ENCODE measurements at regions of chr3 and their contacts with region 1.

Region 1: DNA sequence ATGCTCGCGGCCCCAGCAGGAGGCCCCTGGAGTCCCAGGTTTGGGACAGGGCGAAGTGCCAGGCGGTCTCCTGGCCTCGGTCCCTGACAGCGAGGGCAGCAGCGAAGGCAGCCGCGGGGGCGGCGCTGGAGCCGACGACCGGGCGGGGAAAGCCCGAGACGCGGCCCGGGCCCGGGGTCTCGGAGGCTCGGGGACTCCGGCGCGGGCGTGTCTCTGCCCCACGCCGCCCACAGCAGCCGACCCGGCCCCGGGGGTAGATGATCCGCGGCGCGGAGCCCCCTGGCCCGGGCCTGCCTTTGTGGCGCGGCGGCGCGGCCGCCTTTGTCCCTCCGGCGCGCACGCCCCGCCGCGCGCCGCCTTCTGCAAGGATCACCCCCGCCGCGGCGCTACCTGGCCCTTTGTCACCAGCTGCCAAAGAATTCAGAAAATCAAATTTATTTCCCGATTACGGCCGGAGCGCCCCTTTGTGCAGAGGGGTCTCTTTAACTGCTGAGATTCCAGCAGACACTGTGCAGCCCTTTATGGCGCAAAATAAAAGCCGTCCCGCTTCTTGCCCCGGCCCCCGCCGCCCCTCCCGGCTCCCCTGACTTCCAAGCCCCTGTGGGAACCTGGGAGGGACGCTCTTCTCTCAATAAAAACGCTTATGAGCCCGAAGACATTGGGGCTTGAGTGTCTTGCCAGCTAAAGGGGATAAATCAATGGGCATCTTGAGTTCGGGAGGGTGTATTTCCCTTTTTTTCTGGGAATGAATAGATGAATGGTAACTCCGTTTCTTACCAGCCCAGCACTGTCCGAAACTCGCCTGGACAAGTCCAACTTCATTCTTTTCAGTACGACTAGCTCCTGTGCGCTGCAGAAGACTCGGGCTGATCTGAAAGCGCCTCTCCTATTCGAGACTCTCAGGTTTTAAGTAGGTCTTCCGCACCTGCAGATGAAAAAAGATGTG is 68.4 kb downstream of the HES1 start:
- DNase-seq: peak; percentile 66
- H3K4me3 ChIP-seq: peak overlapping the region; percentile 39 to 46 (median 42)
- H3K27ac ChIP-seq: peak overlapping the region; percentile 38
- H3K4me1 ChIP-seq: peaks cover 5% of the 10 kb centered on the region
- H3K27me3 ChIP-seq: no peaks in the 10 kb centered on the region
- CTCF ChIP-seq: no peak

Region 2: DNA sequence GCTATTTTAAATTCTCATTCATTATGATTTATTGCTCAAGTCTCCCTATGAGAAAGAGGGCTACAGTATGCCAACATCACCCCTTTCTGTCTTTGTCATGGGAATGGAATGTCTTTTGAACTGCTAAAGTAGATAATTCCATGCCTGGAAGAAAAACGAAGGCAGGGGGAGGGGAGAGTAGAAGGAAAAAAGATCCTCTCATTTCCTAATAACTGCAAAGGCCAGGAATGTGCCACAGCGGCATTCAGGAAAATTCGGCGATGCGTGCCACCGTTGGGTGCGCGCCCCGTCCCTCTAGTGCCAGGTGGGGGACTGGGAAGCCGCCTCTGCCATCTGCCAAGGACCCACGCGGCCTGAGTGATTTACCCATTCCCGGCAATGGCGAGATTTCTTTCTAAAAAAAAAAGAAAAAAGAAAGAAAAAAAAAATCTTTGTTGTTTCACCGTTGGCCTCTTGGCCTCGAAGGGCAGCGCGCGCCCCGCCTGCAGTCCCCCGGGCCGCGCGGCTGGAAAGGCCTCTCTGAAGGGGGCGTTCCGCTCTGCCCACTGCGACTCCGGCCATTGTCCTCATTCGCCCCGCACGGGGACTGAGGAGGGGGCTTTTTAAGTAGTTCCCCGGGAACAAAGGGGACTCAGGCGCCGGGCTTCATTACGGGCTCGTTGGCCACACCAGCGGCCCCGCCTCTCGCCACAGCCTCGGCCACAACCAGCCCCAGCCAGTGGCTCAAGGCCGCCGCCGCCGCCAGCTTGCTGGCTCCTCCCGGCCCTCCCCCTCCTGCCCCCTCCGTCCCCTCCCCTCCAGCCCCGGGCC is 92.3 kb after region 1 on chr3:
- CTCF ChIA-PET with region 1: no interaction called
- dilution Hi-C with region 1: no loop called
- in situ Hi-C with region 1: no loop called
- intact Hi-C with region 1: loop called (anchors 5 kb)
- DNase-seq: peak; percentile 73
- H3K4me3 ChIP-seq: peak overlapping the region in 2 of 3 experiments; percentile 13 to 23
- H3K27ac ChIP-seq: peak overlapping the region; percentile 58
- H3K4me1 ChIP-seq: peaks cover 23% of the 10 kb centered on the region
- H3K27me3 ChIP-seq: no peaks in the 10 kb centered on the region
- CTCF ChIP-seq: no peak